Transverse colon (tissue), 4 donors: ENCODE measurements at regions of chr1 and their contacts with region 1.

Region 1: DNA sequence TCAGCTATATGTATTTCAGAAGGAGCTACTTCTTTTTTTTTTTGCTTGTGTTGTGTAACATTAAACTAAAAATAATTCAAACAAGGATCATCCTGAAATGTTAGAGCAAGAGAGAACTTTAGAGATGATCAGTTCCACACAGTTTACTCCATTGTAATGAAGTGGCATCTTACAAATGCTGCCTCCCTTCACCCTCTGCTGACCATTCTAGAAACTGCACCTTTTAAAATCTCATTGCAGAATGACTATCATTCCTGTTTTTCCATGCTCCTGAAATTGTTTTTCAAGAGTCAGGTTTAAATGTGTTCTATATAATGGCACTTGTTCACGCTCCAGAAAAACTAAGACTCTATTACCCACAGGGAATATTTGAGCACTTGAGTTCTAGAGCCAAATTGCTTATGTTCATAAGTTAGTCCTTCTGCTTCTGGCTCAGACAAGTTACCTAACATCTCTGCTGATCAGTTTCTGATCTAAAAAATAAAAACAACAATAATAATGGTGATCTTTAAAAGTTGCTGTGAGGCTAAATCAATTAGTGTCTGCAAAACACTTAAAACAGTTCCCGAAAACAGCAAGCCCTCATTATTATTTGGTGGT is 21.5 kb upstream of the SLC44A5 start:
- DNase-seq: no peak
- H3K4me3 ChIP-seq: no peak overlapping the region
- H3K27ac ChIP-seq: no peak overlapping the region
- H3K4me1 ChIP-seq: no peaks in the 10 kb centered on the region
- H3K27me3 ChIP-seq: peaks cover 6% of the 10 kb centered on the region
- CTCF ChIP-seq: peak; percentile 52 to 72 (median 63)
- EP300 ChIP-seq: no peak
- POLR2A ChIP-seq: no peak

Region 2: DNA sequence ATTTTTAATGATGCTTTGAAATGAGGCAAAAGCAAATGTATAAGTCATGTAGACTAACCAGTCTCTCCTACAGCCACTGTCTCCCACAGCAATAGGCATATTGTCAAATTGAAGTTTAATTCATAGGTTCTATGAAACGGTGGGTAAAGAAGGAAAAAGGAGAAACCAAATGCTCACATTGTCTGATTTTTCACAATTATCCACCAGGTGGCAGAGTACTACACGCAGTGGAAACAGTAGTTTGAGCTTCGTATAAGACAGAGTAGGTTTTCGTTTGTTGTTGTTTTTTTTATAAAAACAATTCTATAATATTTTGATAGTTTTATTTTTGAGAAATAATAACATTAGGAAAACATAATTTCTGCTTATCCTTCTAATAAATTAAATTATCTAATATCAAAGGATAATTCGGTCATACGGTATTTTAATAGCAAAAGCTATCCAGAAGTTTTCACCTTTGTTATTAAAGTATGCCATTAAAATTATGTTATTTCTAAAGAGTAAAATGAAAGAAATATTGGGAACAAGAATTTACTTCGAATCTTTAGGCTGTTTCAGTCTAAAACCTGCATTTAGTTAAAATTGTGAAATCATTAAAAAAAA is 860.4 kb before region 1 on chr1:
- in situ Hi-C with region 1: no loop called
- intact Hi-C with region 1: loop called (anchors 5 kb)
- DNase-seq: no peak
- H3K4me3 ChIP-seq: no peak overlapping the region
- H3K27ac ChIP-seq: no peak overlapping the region
- H3K4me1 ChIP-seq: no peaks in the 10 kb centered on the region
- H3K27me3 ChIP-seq: peaks cover 28% of the 10 kb centered on the region
- CTCF ChIP-seq: peak; percentile 49 to 68 (median 59)
- EP300 ChIP-seq: no peak
- POLR2A ChIP-seq: no peak

Region 3: GRCh38 chr1:75233302-75233929 is 399.0 kb before region 1 on chr1:
- in situ Hi-C with region 1: loop called in 1 of 4 experiments (anchors 25 kb)
- intact Hi-C with region 1: no loop called
- DNase-seq: no peak
- H3K4me3 ChIP-seq: no peak overlapping the region
- H3K27ac ChIP-seq: no peak overlapping the region
- H3K4me1 ChIP-seq: no peaks in the 10 kb centered on the region
- H3K27me3 ChIP-seq: no peaks in the 10 kb centered on the region
- CTCF ChIP-seq: peak; percentile 26 to 63 (median 36)
- EP300 ChIP-seq: no peak
- POLR2A ChIP-seq: no peak

Region 4: GRCh38 chr1:75265792-75266191 is 366.7 kb before region 1 on chr1:
- in situ Hi-C with region 1: loop called in 1 of 4 experiments (anchors 25 kb)
- intact Hi-C with region 1: no loop called
- DNase-seq: no peak
- H3K4me3 ChIP-seq: no peak overlapping the region
- H3K27ac ChIP-seq: no peak overlapping the region
- H3K4me1 ChIP-seq: no peaks in the 10 kb centered on the region
- H3K27me3 ChIP-seq: no peaks in the 10 kb centered on the region
- CTCF ChIP-seq: peak; percentile 4 to 52 (median 43)
- EP300 ChIP-seq: no peak
- POLR2A ChIP-seq: no peak

Region 5: GRCh38 chr1:75293270-75293669 is 339.2 kb before region 1 on chr1:
- in situ Hi-C with region 1: loop called in 1 of 4 experiments (anchors 25 kb)
- intact Hi-C with region 1: no loop called
- DNase-seq: no peak
- H3K4me3 ChIP-seq: no peak overlapping the region
- H3K27ac ChIP-seq: no peak overlapping the region
- H3K4me1 ChIP-seq: no peaks in the 10 kb centered on the region
- H3K27me3 ChIP-seq: no peaks in the 10 kb centered on the region
- CTCF ChIP-seq: no peak
- EP300 ChIP-seq: no peak
- POLR2A ChIP-seq: no peak